ENCODE measurements at regions of chr3 and their contacts with region 1.

Region 1: DNA sequence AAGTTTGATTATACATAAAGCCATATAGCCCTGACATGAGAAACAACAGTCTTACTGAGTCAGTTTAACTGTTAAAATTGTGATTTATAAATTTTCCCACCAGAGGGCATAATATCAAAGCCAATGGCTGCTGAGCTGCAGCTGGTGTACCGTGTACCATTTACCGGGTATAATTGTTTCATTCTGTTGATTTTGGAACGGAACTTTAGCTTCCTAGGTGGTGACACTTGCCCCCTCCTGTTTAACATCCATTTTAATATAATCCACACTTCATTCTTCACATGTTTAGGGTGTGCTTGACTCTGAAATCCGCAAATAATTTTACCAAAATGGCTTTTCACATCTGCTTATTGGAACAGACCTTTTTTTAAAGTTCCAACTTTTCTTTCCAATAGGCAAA is 72.8 kb downstream of the SLC9A9 start:
- DNase-seq: peak; percentile 65
- H3K4me3 ChIP-seq: peak overlapping the region; percentile 55
- H3K27ac ChIP-seq: no peak overlapping the region
- H3K4me1 ChIP-seq: peaks cover 12% of the 10 kb centered on the region
- H3K27me3 ChIP-seq: no peaks in the 10 kb centered on the region

Region 2: GRCh38 chr3:143380449-143380848 is 395.0 kb before region 1 on chr3:
- in situ Hi-C with region 1: no loop called
- DNase-seq: no peak
- H3K4me3 ChIP-seq: no peak overlapping the region
- H3K27ac ChIP-seq: no peak overlapping the region
- H3K4me1 ChIP-seq: no peaks in the 10 kb centered on the region
- H3K27me3 ChIP-seq: no peaks in the 10 kb centered on the region

Region 3: DNA sequence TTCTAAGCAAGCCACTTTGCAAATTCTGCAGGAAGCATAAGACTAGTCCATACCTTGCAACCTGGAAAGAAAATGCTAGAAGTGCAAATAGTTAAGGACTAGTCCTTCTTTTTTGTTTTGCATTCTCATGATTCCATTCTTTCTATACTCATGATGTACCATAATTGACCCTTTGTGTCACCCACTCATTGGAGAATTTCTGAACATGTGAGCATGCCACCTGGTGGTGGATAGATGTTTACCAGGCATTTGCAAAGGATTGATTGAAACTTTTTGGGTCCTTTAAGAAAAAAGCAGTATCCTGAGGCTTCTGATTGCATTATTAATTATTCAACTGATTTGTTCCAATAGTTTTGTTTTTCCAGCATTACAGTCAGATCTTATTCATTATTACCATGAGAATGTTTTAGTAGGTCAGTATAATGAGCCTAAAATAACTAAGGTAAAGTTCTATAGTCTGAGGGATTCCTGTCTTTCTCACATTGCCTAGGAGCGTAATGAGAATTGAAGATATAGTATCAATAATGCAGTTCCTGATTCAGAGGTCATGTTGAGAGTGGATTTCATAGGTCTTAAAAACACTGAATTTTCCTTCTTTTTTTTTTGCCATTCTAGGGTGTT is 176.0 kb after region 1 on chr3:
- in situ Hi-C with region 1: loop called (anchors 10 kb)
- DNase-seq: peak; percentile 71
- H3K4me3 ChIP-seq: no peak overlapping the region
- H3K27ac ChIP-seq: no peak overlapping the region
- H3K4me1 ChIP-seq: no peaks in the 10 kb centered on the region
- H3K27me3 ChIP-seq: no peaks in the 10 kb centered on the region